Activated naive CD4-positive, alpha-beta T cell treated with anti-CD3 and anti-CD28 coated beads for 36 hours (primary cell): ENCODE measurements at regions of chr20 and their contacts with region 1.

Region 1: DNA sequence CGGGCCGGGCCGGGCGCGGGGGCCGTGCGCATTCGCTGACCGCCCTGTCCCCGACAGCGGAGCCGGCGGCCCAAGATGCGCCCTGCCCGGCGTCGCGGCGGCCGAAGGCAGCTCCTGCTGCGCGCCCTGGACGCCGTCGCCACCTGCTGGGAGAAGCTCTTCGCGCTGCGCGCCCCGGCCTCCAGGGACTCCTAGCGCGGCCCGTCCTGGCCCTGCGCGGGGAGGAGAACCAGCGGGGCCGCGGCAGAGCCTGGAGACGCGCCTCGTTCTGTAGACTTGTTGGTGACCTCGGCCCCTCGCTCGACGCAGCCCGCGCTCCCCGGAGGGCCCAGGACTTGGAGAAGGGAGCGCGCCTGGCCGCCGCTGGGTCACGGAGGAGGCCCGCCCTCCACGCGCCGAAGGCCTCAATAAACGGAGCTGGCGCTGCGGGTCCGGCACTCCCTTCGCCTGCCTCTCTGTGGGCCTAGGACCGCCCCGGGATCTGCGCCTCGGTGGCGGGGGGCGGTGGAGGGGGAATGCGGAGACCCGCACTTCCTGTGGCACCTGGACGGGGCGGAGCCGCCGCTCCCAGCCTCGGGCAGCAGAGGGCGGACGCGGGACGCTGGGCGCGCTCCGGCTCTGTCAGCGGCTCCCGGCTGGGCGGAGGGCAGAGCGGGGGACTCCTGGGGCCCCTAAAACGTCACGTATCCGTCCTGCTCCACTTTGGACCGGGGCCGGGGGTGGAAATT is 2.7 kb downstream of the C20orf204 start:
- DNase-seq: peak; percentile 84
- H3K4me3 Mint-ChIP-seq: peak overlapping the region; percentile 67
- H3K27ac Mint-ChIP-seq: no peak overlapping the region
- H3K4me1 Mint-ChIP-seq: peaks cover 53% of the 10 kb centered on the region
- H3K27me3 Mint-ChIP-seq: peaks cover 2% of the 10 kb centered on the region

Region 2: DNA sequence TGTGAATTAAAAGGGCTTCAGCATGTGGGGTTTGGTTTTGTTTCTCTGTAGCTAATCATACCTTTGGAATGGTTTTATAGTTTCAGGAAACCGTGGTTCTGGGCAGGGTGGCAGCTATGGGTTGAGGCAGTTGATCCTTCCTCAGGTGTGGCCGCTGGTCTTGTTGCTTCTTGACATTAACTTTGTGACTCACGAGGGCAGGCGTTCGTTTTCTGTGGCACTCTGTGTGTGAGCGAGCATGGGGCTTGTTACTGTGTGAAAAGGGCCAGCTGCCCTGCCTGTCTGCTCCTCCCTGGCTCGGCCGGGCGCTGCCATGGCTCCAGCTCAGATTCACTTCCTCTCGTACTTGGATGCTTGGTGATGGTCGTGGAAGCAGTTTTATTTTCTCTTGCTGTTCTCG is 127.6 kb before region 1 on chr20:
- CTCF ChIA-PET with region 1: no interaction called
- intact Hi-C with region 1: loop called (anchors 5 kb)
- DNase-seq: no peak
- H3K4me3 Mint-ChIP-seq: no peak overlapping the region
- H3K27ac Mint-ChIP-seq: no peak overlapping the region
- H3K4me1 Mint-ChIP-seq: peaks cover 39% of the 10 kb centered on the region
- H3K27me3 Mint-ChIP-seq: no peaks in the 10 kb centered on the region

Region 3: DNA sequence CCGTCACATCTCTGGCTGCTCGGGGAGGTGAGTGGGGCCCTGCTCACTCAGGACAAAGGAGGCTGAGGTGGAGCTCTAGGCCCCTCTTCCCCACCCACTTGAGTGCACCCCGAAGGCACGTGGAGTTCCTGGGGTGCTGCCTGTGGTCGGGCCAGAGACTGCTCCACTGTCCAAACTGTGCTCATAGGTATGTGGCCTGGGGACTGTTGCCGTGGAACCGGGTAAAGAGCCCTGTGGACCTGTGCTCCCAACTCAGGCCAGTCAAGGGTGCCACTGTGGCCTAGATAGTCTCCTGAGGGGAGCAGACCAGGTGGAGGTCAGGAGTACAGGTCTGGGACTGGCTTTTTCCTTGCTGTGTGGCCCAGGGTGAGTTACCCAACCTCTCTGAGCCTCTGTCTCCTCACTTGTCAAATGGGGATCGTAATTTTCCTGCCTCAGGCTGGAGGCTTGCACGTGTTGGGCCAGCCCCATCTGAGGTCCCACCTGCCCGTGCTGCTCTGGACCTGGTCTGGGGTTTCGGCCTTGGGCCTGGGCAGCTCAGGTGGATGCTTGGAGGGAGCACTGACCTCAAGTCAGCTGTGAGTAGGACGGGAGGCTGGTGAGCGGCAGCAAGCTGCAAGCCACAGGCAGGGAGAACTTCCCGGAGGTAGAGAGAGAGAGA is 81.1 kb after region 1 on chr20:
- CTCF ChIA-PET with region 1: interaction called, 39 read pairs
- intact Hi-C with region 1: loop called (anchors 1 kb)
- DNase-seq: no peak
- H3K4me3 Mint-ChIP-seq: no peak overlapping the region
- H3K27ac Mint-ChIP-seq: peak overlapping the region; percentile 72
- H3K4me1 Mint-ChIP-seq: peaks cover 8% of the 10 kb centered on the region
- H3K27me3 Mint-ChIP-seq: no peaks in the 10 kb centered on the region